SK-N-SH (cell line): ENCODE measurements at regions of chr15 and their contacts with region 1.

Region 1: DNA sequence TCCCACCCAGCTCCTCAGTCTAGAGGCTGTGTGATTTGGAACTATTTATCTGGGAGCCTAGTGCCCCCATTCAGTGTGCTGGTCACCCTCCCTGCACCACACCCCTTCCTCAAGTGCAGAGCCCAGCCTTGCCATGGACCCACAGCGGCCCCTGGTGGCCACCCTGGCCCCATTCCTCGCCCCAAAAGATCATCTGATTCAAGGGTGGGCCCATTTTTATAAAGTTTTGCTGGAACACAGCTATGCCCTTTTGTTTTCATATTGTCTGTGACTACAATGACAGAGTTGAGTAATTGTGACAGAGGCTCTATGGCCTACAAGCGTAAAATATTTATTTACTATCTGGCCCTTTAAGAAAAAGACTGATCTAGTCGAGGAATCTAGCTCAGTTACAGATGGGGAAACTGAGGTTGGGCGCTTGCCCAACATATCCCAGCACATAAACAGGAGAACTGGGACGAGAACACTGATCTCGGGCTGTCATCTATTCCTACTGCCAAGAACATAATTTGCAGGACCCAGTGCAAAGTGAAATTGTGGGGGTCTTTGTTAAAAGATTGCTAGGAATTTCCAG is 1.8 kb downstream of the FES start:
- DNase-seq: peak; percentile 91
- H3K4me3 ChIP-seq: peak overlapping the region in 1 of 2 experiments; percentile 47; a peak in 1 of 4 replicates
- H3K27ac ChIP-seq: no peak overlapping the region
- H3K4me1 ChIP-seq: peaks cover 0 to 14% of the 10 kb centered on the region in 2 experiments; a peak in 1 of 4 replicates
- H3K27me3 ChIP-seq: no peaks in the 10 kb centered on the region
- CTCF ChIP-seq: peak; percentile 99
- EP300 ChIP-seq: no peak
- RAD21 ChIP-seq: peak; percentile 96

Region 2: DNA sequence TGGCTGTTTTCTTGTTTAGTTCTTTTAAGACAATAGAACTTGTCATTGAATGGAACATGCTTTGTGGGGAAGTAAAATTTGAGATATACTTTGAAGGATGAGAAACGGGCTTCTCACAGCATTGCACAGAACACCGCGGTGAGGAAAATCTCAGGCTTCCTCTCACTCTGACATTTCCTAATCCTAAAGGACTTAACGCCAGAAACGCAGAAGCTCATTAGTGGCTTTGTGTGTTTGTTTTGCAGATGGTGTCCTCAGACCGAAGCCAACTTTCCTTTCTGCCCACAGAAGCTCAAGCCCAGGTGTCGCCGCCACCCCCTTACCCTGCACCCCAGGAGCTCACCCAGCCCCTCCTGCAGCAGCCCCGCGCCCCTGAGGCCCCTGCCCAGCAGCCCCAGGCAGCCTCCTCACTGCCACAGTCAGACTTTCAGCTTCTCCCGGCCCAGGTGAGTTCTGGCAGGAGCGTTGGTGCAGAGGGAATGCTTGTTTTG is 247.9 kb before region 1 on chr15:
- CTCF ChIA-PET with region 1: interaction called, 27 read pairs
- POLR2A ChIA-PET with region 1: no interaction called
- DNase-seq: peak; percentile 54
- H3K4me3 ChIP-seq: no peak overlapping the region
- H3K27ac ChIP-seq: peak overlapping the region in 1 of 2 experiments; percentile 91; a peak in 2 of 4 replicates
- H3K4me1 ChIP-seq: peaks cover 0 to 12% of the 10 kb centered on the region in 2 experiments; a peak in 3 of 4 replicates
- H3K27me3 ChIP-seq: no peaks in the 10 kb centered on the region
- CTCF ChIP-seq: no peak
- EP300 ChIP-seq: no peak
- RAD21 ChIP-seq: no peak

Region 3: DNA sequence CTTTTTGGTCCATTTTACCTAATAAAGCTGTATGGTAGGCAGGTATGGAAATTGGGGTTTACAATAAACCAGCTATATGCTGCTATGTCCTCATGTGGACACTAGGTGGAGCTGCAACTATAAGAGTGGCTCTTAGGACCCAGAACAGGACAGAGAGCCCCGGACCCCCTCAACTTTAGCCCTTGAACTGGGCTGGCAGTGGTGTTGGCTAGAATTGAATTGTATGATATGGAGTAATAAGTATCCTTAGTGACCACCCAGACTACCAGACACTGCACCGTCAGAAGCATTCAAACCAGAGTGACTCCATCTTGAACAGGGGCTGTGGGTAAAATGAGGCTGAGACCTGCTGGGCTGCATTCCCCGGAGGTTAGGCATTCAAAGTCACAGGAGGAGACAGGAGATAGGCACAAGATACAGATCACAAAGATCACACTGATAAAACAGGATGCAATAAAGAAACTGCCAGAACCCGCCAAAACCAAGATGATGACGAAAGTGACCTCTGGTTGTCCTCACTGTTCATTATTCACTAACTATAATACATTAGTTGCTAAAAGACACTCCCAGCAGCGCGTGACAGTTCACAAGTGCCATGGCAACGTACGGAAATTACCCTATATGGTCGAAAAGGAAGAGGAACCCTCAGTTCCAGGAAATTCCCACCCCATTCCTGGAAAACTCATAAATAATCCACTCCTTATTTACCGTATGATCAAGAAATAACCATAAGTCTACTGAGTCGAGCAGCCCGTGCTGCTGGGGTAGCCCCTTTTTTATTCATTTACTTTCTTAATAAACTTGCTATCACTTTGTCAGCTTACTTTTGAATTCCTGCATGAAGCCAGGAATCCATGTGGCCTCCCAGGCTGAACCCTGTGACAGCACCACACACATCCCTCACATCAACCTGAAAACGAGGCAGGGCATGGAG is 237.7 kb before region 1 on chr15:
- CTCF ChIA-PET with region 1: interaction called, 55 read pairs
- POLR2A ChIA-PET with region 1: no interaction called
- DNase-seq: peak; percentile 86
- H3K4me3 ChIP-seq: no peak overlapping the region
- H3K27ac ChIP-seq: no peak overlapping the region
- H3K4me1 ChIP-seq: peaks cover 5 to 12% of the 10 kb centered on the region in 2 experiments
- H3K27me3 ChIP-seq: no peaks in the 10 kb centered on the region
- CTCF ChIP-seq: peak; percentile 96
- EP300 ChIP-seq: no peak
- RAD21 ChIP-seq: peak; percentile 93

Region 4: GRCh38 chr15:90654233-90655124 is 231.6 kb before region 1 on chr15:
- CTCF ChIA-PET with region 1: interaction called, 29 read pairs
- POLR2A ChIA-PET with region 1: no interaction called
- DNase-seq: no peak
- H3K4me3 ChIP-seq: no peak overlapping the region
- H3K27ac ChIP-seq: no peak overlapping the region
- H3K4me1 ChIP-seq: peaks cover 6 to 16% of the 10 kb centered on the region in 2 experiments; a peak in 3 of 4 replicates
- H3K27me3 ChIP-seq: no peaks in the 10 kb centered on the region
- CTCF ChIP-seq: no peak
- EP300 ChIP-seq: no peak
- RAD21 ChIP-seq: no peak

Region 5: DNA sequence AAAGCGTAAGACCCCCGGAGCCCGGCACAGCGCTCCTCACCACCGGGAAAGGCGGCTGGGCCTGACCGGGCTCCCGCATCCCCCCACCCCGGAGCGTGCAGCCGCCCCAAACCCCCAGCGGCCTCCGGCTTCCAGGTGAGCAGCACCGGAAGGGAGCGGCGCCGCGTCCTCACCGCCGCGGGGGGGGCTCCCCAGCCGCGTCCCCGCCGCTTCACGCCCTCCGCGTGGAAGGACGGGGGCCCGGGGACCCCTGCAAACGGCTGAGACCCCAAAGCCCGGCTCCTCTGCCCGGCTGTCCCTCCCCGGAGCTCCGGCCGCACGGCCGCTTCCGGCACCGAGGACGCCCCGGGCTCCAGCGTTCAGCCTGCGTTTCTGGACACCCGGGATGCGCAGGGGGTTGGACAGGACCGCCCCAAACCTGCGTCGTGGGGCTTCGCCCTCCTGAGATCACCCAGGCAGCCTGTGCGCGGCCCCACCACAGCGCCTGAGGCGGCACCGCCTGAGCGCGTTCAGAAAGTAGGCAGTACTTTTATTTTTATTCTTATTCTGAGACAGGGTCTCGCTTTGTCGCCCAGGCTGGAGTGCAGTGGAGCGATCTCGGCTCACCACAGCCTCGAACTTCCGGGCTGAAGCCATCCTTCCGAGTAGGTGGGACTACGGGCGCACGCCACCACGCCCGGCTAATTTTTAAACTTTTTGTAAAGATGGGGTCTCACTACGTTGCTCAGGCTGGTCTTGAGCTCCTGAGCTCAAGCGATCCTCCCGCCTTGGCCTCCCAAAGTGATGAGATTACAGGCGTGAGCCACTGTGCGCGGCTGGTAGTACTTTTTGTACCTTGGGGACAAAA is 220.6 kb before region 1 on chr15:
- CTCF ChIA-PET with region 1: interaction called, 13 read pairs
- POLR2A ChIA-PET with region 1: no interaction called
- DNase-seq: peak; percentile 91
- H3K4me3 ChIP-seq: peak overlapping the region; percentile 53 to 62
- H3K27ac ChIP-seq: peak overlapping the region; percentile 59 to 74
- H3K4me1 ChIP-seq: peaks cover 0 to 12% of the 10 kb centered on the region in 2 experiments; a peak in 2 of 4 replicates
- H3K27me3 ChIP-seq: no peaks in the 10 kb centered on the region
- CTCF ChIP-seq: no peak
- EP300 ChIP-seq: no peak
- RAD21 ChIP-seq: no peak

Region 6: DNA sequence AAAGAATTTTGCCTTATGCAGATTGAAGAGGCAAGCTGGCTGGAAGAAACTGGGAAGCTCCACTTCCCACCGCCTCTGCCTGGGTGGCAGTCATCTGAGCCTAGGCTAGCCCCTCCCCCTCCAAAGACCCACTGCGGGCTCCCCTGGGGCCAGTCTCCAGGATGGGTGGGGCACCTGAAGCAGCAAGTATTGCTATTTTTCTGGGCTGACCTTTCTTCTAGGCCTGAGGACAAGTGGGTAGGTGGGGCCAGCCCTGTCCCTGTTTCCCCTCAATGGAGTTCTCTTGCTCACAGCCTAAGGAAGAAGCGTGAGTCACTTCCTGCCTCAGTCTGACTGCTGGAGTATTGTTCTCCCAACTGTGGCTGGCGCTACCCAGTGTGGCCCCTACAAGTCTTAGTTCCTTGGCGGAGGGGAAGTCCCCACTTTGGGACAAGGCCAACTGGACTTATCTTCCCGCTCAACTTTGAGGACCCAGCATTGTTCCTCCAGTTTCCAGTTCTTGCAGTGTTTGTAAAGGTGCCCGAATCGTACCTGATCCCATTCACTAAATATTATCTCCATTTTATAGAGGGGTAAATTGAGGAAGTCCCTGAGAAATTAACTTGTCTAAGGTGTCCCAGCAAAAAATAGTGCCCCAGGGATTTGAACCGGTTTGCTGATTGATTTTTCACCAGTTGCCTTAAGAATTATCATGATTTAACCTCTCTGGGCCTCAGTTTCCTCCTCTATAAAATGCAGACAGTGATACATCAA is 16.4 kb before region 1 on chr15:
- CTCF ChIA-PET with region 1: interaction called, 24 read pairs
- POLR2A ChIA-PET with region 1: no interaction called
- DNase-seq: no peak
- H3K4me3 ChIP-seq: peak overlapping the region in 1 of 2 experiments; percentile 80; a peak in 2 of 4 replicates
- H3K27ac ChIP-seq: peak overlapping the region; percentile 36 to 81; a peak in 3 of 4 replicates
- H3K4me1 ChIP-seq: peaks cover 29 to 39% of the 10 kb centered on the region in 2 experiments; a peak in 2 of 4 replicates
- H3K27me3 ChIP-seq: no peaks in the 10 kb centered on the region
- CTCF ChIP-seq: no peak
- EP300 ChIP-seq: peak in 1 of 2 experiments; percentile 29; a peak in 1 of 4 replicates
- RAD21 ChIP-seq: no peak

Region 7: DNA sequence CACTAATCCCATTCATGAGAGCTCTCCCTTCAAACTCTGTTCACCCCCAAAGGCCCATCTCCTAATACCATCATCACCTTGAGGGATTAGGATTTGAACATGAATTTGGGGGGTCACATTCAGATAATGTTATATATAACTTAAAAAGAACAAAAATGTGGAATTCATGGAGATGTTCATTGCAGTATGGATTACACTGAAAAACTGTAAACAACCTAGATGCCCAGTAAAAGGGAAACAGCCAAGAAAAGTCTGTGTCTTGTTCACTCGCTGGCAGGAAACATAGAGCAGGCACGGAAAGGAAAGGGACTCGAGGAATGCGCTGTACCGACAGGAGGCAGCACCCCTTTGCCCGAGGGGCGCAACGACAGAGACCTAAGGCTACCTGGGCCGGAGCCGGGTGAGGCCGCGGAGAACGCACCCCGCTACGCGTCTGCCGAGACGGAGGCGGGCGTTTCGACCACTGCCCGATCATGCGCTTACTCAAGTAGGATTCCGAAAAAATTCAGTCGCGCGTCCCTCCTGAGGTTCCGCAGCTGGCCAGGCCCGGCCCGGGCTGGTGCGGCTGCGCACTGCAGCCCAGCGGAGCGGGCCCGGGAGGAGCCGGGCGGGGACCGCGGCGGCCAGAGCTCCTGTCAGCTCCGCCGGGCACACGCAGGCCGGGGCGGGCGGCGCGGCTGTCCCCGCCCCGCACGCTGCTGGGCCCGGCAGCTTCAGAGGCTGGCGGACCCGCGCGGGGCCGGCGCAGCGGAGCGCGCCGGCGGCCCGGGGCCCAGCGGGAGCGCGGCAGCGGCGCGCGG is 16.1 kb after region 1 on chr15:
- CTCF ChIA-PET with region 1: interaction called, 54 read pairs
- POLR2A ChIA-PET with region 1: interaction called, 3 read pairs
- DNase-seq: peak; percentile 99
- H3K4me3 ChIP-seq: peak overlapping the region; percentile 68 to 91
- H3K27ac ChIP-seq: peak overlapping the region; percentile 62 to 92
- H3K4me1 ChIP-seq: peaks cover 3 to 11% of the 10 kb centered on the region in 2 experiments; a peak in 2 of 4 replicates
- H3K27me3 ChIP-seq: no peaks in the 10 kb centered on the region
- CTCF ChIP-seq: peak; percentile 73
- EP300 ChIP-seq: no peak
- RAD21 ChIP-seq: peak; percentile 34; the same call in 1 of the 2 replicates

Region 8: GRCh38 chr15:91116113-91117067 is 230.3 kb after region 1 on chr15:
- CTCF ChIA-PET with region 1: no interaction called
- POLR2A ChIA-PET with region 1: no interaction called
- DNase-seq: no peak
- H3K4me3 ChIP-seq: no peak overlapping the region
- H3K27ac ChIP-seq: no peak overlapping the region
- H3K4me1 ChIP-seq: no peaks in the 10 kb centered on the region
- H3K27me3 ChIP-seq: no peaks in the 10 kb centered on the region; the same call in 1 of the 2 replicates
- CTCF ChIP-seq: no peak
- EP300 ChIP-seq: no peak
- RAD21 ChIP-seq: no peak